ENCODE measurements at regions of chr2 and their contacts with region 1.

Region 1: GRCh38 chr2:179917272-179917671 is 55.9 kb upstream of the ZNF385B start:
- DNase-seq: no peak
- H3K4me3 ChIP-seq: no peak overlapping the region
- H3K4me1 ChIP-seq: no peaks in the 10 kb centered on the region
- H3K27me3 ChIP-seq: peaks cover 3% of the 10 kb centered on the region; the same call in 1 of the 2 replicates

Region 2: GRCh38 chr2:179422037-179422643 is 495.1 kb before region 1 on chr2:
- in situ Hi-C with region 1: loop called (anchors 25 kb)
- DNase-seq: peak; percentile 64 to 88
- H3K4me3 ChIP-seq: no peak overlapping the region
- H3K4me1 ChIP-seq: 0 out of 2 replicates have a peak, but pooled peaks cover 4% of the 10 kb centered on the region
- H3K27me3 ChIP-seq: no peaks in the 10 kb centered on the region

Measured in HAP-1 (cell line).